SK-N-SH (cell line): ENCODE measurements at regions of chr19 and their contacts with region 1.

Region 1: GRCh38 chr19:46728693-46729676 is 12.1 kb upstream of the PRKD2 start:
- DNase-seq: peak; percentile 95
- H3K4me3 ChIP-seq: no peak overlapping the region; a peak in 1 of 4 replicates
- H3K27ac ChIP-seq: no peak overlapping the region; a peak in 1 of 4 replicates
- H3K4me1 ChIP-seq: peaks cover 3 to 10% of the 10 kb centered on the region in 2 experiments; a peak in 2 of 4 replicates
- H3K27me3 ChIP-seq: no peaks in the 10 kb centered on the region
- CTCF ChIP-seq: peak; percentile 94
- EP300 ChIP-seq: no peak
- RAD21 ChIP-seq: peak; percentile 74

Region 2: GRCh38 chr19:46614114-46614722 is 114.8 kb before region 1 on chr19:
- CTCF ChIA-PET with region 1: interaction called, 30 read pairs
- POLR2A ChIA-PET with region 1: no interaction called
- DNase-seq: peak; percentile 91
- H3K4me3 ChIP-seq: peak overlapping the region in 1 of 2 experiments; percentile 8; a peak in 1 of 4 replicates
- H3K27ac ChIP-seq: peak overlapping the region in 1 of 2 experiments; percentile 31; a peak in 1 of 4 replicates
- H3K4me1 ChIP-seq: peaks cover 0 to 28% of the 10 kb centered on the region in 2 experiments; a peak in 2 of 4 replicates
- H3K27me3 ChIP-seq: no peaks in the 10 kb centered on the region
- CTCF ChIP-seq: peak; percentile 84
- EP300 ChIP-seq: no peak
- RAD21 ChIP-seq: peak; percentile 92

Region 3: DNA sequence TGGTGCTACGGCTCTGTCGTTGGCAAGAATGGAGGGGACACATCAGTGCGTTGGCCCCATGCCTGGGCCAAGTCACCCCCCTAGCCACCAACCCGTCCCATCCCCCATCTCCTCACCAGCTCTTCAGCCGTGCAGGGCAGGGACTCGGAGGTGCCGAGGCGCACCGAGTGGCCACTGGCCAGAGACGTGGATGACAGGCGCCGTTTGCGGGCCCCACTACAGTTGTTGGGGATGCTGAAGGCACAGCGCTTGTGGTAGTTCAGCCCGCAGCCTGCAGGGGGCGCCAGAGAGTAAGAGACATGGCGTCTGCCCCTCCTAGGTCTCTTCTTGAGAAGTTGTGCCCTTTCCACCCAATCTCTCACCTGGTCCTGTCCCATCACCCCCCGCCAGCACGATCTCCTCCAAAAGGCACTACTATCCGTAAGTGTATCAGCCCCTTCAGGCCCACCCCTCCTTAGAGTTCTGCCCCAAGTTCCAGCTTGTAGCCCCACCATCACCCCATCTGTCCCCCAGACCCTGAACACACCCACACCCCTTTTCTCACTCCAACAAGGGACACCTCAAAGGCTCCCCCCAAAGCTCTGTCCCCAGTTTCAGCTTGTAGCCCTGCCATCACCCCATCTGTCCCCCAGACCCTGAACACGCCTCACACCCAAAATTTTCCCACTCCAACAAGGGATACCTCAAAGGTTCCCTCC is 24.5 kb before region 1 on chr19:
- CTCF ChIA-PET with region 1: interaction called, 58 read pairs
- POLR2A ChIA-PET with region 1: interaction called, 5 read pairs
- DNase-seq: peak; percentile 83
- H3K4me3 ChIP-seq: peak overlapping the region in 1 of 2 experiments; percentile 47; a peak in 1 of 4 replicates
- H3K27ac ChIP-seq: no peak overlapping the region
- H3K4me1 ChIP-seq: no peaks in the 10 kb centered on the region
- H3K27me3 ChIP-seq: no peaks in the 10 kb centered on the region
- CTCF ChIP-seq: peak; percentile 78
- EP300 ChIP-seq: no peak
- RAD21 ChIP-seq: peak; percentile 48

Region 4: DNA sequence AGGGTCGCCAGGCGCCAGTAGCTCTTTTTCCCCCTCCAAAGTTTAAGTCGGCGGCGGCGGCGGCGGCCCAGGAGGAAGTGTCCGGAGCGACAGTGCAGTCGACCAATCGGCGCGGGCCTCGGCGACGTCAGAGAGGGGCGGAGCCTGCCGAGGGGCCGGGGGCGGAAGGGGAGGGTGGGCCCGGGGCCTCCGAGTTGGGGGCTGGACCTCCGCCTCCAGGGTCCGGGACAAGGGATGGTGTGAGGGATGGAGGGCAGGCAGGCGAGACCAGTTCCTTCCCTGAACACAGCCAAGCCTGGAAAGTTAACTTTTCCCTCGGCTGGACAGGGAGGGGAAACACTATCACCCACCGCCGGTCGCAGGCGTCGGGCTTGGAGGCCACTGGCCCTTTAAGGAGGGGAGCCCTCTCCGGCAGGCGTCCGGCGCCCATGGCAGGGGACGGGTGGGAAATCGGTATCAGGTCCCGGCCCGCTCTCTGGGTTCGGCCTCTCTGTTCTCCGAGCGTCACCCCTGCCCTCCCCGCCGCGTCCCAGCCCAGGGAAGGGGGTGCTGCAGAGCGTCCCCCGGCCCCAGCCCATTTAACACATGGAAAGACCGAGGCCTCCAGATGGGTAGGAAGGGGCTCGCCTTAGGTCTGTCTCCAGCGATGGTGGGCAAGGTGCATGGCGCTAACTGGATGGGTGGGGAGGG is 11.8 kb before region 1 on chr19 and contains the start of gene PRKD2:
- CTCF ChIA-PET with region 1: interaction called, 58 read pairs
- POLR2A ChIA-PET with region 1: no interaction called
- DNase-seq: peak; percentile 98
- H3K4me3 ChIP-seq: peak within 1 kb of the TSS; percentile 85 to 88
- H3K27ac ChIP-seq: peak within 1 kb of the TSS; percentile 79 to 91
- H3K4me1 ChIP-seq: peaks cover 0 to 19% of the 10 kb centered on the region in 2 experiments; a peak in 2 of 4 replicates
- H3K27me3 ChIP-seq: no peaks in the 10 kb centered on the region
- CTCF ChIP-seq: no peak
- EP300 ChIP-seq: no peak
- RAD21 ChIP-seq: no peak
- polyA plus RNA-seq, gene PRKD2: 14.1 and 21.4 TPM in 2 replicates

Region 5: GRCh38 chr19:46748325-46749109 is 19.5 kb after region 1 on chr19:
- CTCF ChIA-PET with region 1: interaction called, 48 read pairs
- POLR2A ChIA-PET with region 1: interaction called, 3 read pairs
- DNase-seq: peak; percentile 75
- H3K4me3 ChIP-seq: no peak overlapping the region; a peak in 1 of 4 replicates
- H3K27ac ChIP-seq: no peak overlapping the region
- H3K4me1 ChIP-seq: peaks cover 0 to 17% of the 10 kb centered on the region in 2 experiments; a peak in 1 of 4 replicates
- H3K27me3 ChIP-seq: no peaks in the 10 kb centered on the region
- CTCF ChIP-seq: peak; percentile 89
- EP300 ChIP-seq: no peak
- RAD21 ChIP-seq: peak; percentile 30; the same call in 1 of the 2 replicates

Region 6: GRCh38 chr19:46753420-46754155 is 24.6 kb after region 1 on chr19:
- CTCF ChIA-PET with region 1: interaction called, 12 read pairs
- POLR2A ChIA-PET with region 1: no interaction called
- DNase-seq: peak; percentile 77
- H3K4me3 ChIP-seq: no peak overlapping the region
- H3K27ac ChIP-seq: no peak overlapping the region
- H3K4me1 ChIP-seq: peaks cover 0 to 2% of the 10 kb centered on the region in 2 experiments; a peak in 1 of 4 replicates
- H3K27me3 ChIP-seq: no peaks in the 10 kb centered on the region
- CTCF ChIP-seq: peak; percentile 61
- EP300 ChIP-seq: no peak
- RAD21 ChIP-seq: peak; percentile 51

Region 7: DNA sequence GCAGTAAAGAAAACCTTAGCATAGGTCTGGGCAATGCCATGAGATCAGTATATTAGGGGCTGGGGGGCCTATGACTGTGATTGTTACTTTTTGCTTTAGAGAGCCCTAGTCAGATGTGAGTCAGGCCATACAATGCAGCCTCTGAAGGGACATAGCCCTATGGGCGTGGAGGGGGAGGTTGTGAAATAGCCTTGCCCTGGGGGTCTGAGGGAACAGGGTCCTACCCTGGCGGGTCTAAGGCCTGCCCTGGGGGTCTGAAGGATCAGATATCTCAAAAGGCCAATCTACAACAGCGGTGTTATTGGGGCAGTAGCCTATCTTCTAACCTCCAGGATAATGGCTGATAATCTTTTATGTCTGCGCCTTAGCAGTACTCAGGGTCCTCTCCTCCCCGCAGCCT is 73.2 kb after region 1 on chr19:
- CTCF ChIA-PET with region 1: no interaction called
- POLR2A ChIA-PET with region 1: no interaction called
- DNase-seq: peak; percentile 2
- H3K4me3 ChIP-seq: no peak overlapping the region
- H3K27ac ChIP-seq: no peak overlapping the region
- H3K4me1 ChIP-seq: no peaks in the 10 kb centered on the region
- H3K27me3 ChIP-seq: no peaks in the 10 kb centered on the region
- CTCF ChIP-seq: no peak
- EP300 ChIP-seq: no peak
- RAD21 ChIP-seq: no peak

Region 8: GRCh38 chr19:46913852-46914430 is 185.0 kb after region 1 on chr19:
- CTCF ChIA-PET with region 1: no interaction called
- POLR2A ChIA-PET with region 1: no interaction called
- DNase-seq: no peak
- H3K4me3 ChIP-seq: no peak overlapping the region
- H3K27ac ChIP-seq: peak overlapping the region; percentile 70 to 75
- H3K4me1 ChIP-seq: peaks cover 8 to 15% of the 10 kb centered on the region in 2 experiments; a peak in 3 of 4 replicates
- H3K27me3 ChIP-seq: no peaks in the 10 kb centered on the region
- CTCF ChIP-seq: no peak
- EP300 ChIP-seq: peak; percentile 60 to 82; a peak in 3 of 4 replicates
- RAD21 ChIP-seq: no peak